ENCODE measurements at regions of chr1 and their contacts with region 1.

Region 1: DNA sequence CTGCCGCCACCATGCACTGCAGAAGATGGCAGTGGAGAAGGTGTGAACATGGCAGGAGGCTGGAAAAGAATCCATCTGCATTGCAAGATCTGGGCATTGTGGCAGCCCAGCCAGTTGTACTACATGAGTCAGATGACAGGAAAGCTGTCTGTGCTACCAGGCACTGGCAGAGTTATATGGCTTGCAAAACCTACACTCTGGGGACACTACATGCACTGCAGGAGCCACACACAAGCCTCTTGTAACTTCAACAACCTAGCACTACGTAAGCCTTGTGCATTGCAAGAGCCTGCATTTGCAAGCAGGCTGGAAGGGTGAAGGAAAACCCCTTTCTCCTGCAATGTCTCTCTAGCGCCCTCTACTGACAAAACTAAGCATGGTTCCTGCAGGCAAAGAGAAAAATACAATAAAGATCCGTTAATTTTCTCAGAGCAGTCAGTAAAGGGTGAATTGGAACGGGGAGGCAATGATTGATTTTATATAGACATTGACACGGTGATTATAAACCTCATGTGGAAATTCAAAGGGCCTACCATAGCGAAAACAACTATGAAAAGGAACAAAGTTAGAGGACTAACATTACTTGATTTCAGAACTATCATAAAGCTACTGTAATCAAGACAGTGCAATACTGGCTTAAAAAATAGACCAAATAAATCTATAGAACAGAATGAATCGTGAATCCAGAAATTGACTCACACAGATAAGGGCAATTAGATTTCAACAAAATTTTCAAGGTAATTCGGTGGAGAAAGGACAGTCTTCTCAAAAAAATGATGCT is 26.2 kb upstream of the DYNLT5 start:
- DNase-seq: peak; percentile 78
- H3K4me3 Mint-ChIP-seq: no peak overlapping the region
- H3K27ac Mint-ChIP-seq: no peak overlapping the region
- H3K4me1 Mint-ChIP-seq: peaks cover 16% of the 10 kb centered on the region
- H3K27me3 Mint-ChIP-seq: no peaks in the 10 kb centered on the region
- CTCF ChIP-seq: peak; percentile 88

Region 2: DNA sequence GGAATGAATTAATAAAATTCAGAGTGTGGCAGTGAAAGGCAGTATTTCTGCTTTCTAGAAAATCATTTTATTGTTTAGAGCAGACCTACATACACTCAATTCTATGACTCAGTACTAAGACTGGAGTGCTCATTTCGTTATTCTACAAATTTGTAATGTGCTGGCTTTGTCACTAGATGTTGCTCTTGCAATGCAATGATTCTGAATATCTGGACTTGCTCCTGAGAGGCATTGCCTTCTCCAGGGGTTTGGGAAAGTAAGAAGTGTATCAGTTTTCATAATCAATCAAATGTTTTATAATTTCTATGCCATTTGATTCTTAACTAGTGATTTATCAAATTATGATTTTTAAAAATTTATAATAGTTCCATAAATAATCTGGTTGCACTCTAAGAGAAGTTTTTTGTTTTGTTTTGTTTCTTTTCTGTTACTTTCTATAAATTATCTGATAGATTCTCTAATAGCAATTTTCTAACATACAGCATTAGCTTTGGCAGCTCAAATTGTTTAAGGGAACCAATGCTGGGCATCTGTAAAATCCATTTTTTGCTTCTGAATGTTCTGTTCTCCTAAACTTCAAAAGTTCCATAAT is 472.6 kb before region 1 on chr1:
- CTCF ChIA-PET with region 1: interaction called, 4 read pairs
- POLR2A ChIA-PET with region 1: no interaction called
- intact Hi-C with region 1: loop called (anchors 1 kb)
- DNase-seq: peak; percentile 77
- H3K4me3 Mint-ChIP-seq: no peak overlapping the region
- H3K27ac Mint-ChIP-seq: no peak overlapping the region
- H3K4me1 Mint-ChIP-seq: peaks cover 32% of the 10 kb centered on the region
- H3K27me3 Mint-ChIP-seq: no peaks in the 10 kb centered on the region
- CTCF ChIP-seq: peak; percentile 77

Region 3: GRCh38 chr1:66446261-66447001 is 279.6 kb before region 1 on chr1:
- CTCF ChIA-PET with region 1: interaction called, 16 read pairs
- POLR2A ChIA-PET with region 1: no interaction called
- intact Hi-C with region 1: loop called (anchors 1 kb)
- DNase-seq: peak; percentile 68
- H3K4me3 Mint-ChIP-seq: no peak overlapping the region
- H3K27ac Mint-ChIP-seq: no peak overlapping the region
- H3K4me1 Mint-ChIP-seq: no peaks in the 10 kb centered on the region
- H3K27me3 Mint-ChIP-seq: no peaks in the 10 kb centered on the region
- CTCF ChIP-seq: peak; percentile 75

Region 4: DNA sequence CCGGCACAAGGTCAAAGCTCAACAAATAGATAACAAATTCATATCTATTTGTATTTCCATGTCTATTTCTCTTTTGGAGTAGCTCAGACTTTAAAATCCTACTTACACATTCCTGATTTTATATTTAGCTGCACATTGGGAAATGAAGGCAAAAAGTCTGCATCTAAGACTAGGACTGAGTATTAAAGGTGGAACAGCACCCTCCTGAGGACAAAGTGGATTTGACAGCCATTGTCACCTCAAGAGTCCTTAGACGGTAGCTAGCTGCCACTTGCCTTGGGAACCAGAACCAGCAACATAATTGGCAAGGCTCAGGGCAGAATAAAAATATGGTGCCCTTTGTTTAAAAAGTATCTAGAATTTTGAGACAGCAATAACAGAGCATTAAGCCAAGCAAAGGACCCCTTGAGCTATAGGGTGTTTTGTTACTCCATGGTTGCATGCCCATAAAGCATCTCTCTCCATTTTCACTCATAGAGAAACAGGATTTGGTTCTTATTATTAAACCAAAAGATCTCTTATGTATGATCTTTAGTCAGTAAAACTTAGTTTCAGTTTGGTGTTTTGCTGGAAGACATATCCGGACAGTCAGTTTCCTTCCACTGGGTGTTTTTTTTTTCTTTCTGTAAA is 222.1 kb before region 1 on chr1:
- CTCF ChIA-PET with region 1: interaction called, 8 read pairs
- POLR2A ChIA-PET with region 1: no interaction called
- intact Hi-C with region 1: loop called (anchors 5 kb)
- DNase-seq: peak; percentile 69
- H3K4me3 Mint-ChIP-seq: no peak overlapping the region
- H3K27ac Mint-ChIP-seq: no peak overlapping the region
- H3K4me1 Mint-ChIP-seq: no peaks in the 10 kb centered on the region
- H3K27me3 Mint-ChIP-seq: no peaks in the 10 kb centered on the region
- CTCF ChIP-seq: peak; percentile 44

Region 5: GRCh38 chr1:66685670-66686069 is 40.4 kb before region 1 on chr1:
- CTCF ChIA-PET with region 1: interaction called, 10 read pairs
- POLR2A ChIA-PET with region 1: no interaction called
- intact Hi-C with region 1: no loop called
- DNase-seq: no peak
- H3K4me3 Mint-ChIP-seq: no peak overlapping the region
- H3K27ac Mint-ChIP-seq: no peak overlapping the region
- H3K4me1 Mint-ChIP-seq: peaks cover 12% of the 10 kb centered on the region
- H3K27me3 Mint-ChIP-seq: no peaks in the 10 kb centered on the region
- CTCF ChIP-seq: no peak

Region 6: DNA sequence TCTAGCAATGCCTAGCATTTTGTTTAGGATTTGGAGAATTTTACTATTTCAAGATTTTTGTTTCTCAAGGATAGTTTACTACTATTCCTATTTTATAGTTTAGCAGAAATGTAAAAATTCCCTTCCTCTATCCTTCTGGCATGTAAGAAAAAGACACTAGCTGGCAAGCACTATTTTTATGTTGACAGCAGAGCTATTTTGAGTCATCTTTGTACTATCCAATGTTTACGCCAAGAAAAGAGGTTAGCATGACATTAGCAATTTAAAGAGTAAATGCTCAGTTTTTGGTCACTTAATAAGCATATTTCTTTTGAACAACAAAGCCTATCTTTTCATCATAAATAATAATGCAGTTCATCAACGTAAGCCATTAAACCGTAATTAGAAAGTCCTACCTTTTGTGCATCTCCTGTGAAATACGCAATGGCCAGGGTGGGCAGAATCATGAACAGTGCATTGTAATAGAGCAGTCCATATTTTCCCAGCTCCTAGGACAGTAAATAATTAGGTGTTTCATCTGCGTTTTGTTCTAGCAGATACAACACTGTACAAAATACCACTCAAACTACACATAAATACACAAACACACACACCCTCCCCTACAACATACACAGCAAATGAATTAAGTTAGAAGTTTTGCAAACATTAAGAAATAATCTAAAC is 315.9 kb after region 1 on chr1:
- CTCF ChIA-PET with region 1: no interaction called
- POLR2A ChIA-PET with region 1: no interaction called
- intact Hi-C with region 1: no loop called
- DNase-seq: no peak
- H3K4me3 Mint-ChIP-seq: no peak overlapping the region
- H3K27ac Mint-ChIP-seq: no peak overlapping the region
- H3K4me1 Mint-ChIP-seq: no peaks in the 10 kb centered on the region
- H3K27me3 Mint-ChIP-seq: no peaks in the 10 kb centered on the region
- CTCF ChIP-seq: no peak

Measured in MCF 10A (cell line).